ENCODE measurements at regions of chrX and their contacts with region 1.

Region 1: GRCh38 chrX:16695079-16695676 is 17.3 kb downstream of the CTPS2 start:
- DNase-seq: peak; percentile 86
- H3K4me3 Mint-ChIP-seq: no peak overlapping the region
- H3K27ac Mint-ChIP-seq: no peak overlapping the region
- H3K4me1 Mint-ChIP-seq: no peaks in the 10 kb centered on the region
- H3K27me3 Mint-ChIP-seq: no peaks in the 10 kb centered on the region

Region 2: GRCh38 chrX:16436348-16437188 is 258.6 kb before region 1 on chrX:
- intact Hi-C with region 1: loop called (anchors 10 kb)
- DNase-seq: peak; percentile 87
- H3K4me3 Mint-ChIP-seq: no peak overlapping the region
- H3K27ac Mint-ChIP-seq: no peak overlapping the region
- H3K4me1 Mint-ChIP-seq: peaks cover 8% of the 10 kb centered on the region
- H3K27me3 Mint-ChIP-seq: no peaks in the 10 kb centered on the region

Region 3: DNA sequence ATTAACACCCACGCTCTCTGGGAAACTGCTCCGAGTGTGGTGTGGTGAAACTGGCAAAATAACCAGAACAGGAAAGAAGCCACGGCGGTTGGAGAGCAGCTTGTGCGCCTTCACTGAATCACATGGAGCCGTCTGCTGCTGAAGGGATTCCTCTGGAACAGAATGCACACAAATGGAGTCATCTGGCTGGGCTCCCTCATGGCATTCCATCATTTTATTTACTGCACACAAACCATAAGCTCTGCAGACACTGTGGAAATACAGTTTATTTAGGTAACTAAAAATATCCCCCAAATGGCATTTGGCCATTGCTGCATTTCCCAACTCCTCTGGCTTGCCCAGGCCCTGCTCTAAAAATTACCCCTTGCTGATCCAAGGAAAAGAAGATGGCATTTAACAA is 232.3 kb before region 1 on chrX:
- intact Hi-C with region 1: no loop called
- DNase-seq: no peak
- H3K4me3 Mint-ChIP-seq: no peak overlapping the region
- H3K27ac Mint-ChIP-seq: no peak overlapping the region
- H3K4me1 Mint-ChIP-seq: no peaks in the 10 kb centered on the region
- H3K27me3 Mint-ChIP-seq: no peaks in the 10 kb centered on the region

Region 4: DNA sequence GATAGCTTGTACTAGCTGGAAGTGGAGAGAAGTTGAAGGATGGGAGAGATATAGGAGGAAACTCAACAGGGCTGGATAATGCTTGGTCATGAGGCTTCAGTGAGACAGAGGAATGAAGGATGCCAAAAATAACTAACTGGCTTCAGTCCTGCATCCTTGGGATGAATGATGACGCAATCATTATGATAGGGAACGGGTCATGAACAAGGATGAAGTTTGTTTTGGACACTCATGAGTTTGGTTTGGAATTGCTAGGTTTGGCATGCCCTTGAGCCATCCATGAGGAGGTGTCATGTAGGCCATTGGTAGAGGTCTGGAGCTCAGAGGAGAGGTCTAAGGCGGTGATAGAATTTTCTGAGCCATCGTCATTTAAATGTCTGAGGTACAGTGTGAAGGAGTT is 519.8 kb after region 1 on chrX:
- intact Hi-C with region 1: no loop called
- DNase-seq: no peak
- H3K4me3 Mint-ChIP-seq: no peak overlapping the region
- H3K27ac Mint-ChIP-seq: no peak overlapping the region
- H3K4me1 Mint-ChIP-seq: no peaks in the 10 kb centered on the region
- H3K27me3 Mint-ChIP-seq: no peaks in the 10 kb centered on the region